Activated CD4-positive, alpha-beta memory T cell treated with anti-CD3 and anti-CD28 coated beads for 36 hours (primary cell): ENCODE measurements at regions of chr3 and their contacts with region 1.

Region 1: GRCh38 chr3:48556793-48557626 is at the start of gene PFKFB4:
- DNase-seq: peak; percentile 100
- H3K4me3 Mint-ChIP-seq: peak within 1 kb of the TSS; percentile 83
- H3K27ac Mint-ChIP-seq: peak within 1 kb of the TSS; percentile 59
- H3K4me1 Mint-ChIP-seq: peaks cover 16% of the 10 kb centered on the region
- H3K27me3 Mint-ChIP-seq: no peaks in the 10 kb centered on the region
- total RNA-seq, gene PFKFB4: 19.4 to 22.4 TPM

Region 2: GRCh38 chr3:48188266-48189201 is 368.5 kb before region 1 on chr3 and contains the start of gene CDC25A:
- CTCF ChIA-PET with region 1: no interaction called
- POLR2A ChIA-PET with region 1: interaction called, 3 read pairs
- intact Hi-C with region 1: loop called (anchors 2 kb)
- DNase-seq: peak; percentile 98
- H3K4me3 Mint-ChIP-seq: peak within 1 kb of the TSS; percentile 94
- H3K27ac Mint-ChIP-seq: peak within 1 kb of the TSS; percentile 66
- H3K4me1 Mint-ChIP-seq: peaks cover 14% of the 10 kb centered on the region
- H3K27me3 Mint-ChIP-seq: peaks cover 7% of the 10 kb centered on the region
- total RNA-seq, gene CDC25A: 33.7 to 36.8 TPM

Region 3: DNA sequence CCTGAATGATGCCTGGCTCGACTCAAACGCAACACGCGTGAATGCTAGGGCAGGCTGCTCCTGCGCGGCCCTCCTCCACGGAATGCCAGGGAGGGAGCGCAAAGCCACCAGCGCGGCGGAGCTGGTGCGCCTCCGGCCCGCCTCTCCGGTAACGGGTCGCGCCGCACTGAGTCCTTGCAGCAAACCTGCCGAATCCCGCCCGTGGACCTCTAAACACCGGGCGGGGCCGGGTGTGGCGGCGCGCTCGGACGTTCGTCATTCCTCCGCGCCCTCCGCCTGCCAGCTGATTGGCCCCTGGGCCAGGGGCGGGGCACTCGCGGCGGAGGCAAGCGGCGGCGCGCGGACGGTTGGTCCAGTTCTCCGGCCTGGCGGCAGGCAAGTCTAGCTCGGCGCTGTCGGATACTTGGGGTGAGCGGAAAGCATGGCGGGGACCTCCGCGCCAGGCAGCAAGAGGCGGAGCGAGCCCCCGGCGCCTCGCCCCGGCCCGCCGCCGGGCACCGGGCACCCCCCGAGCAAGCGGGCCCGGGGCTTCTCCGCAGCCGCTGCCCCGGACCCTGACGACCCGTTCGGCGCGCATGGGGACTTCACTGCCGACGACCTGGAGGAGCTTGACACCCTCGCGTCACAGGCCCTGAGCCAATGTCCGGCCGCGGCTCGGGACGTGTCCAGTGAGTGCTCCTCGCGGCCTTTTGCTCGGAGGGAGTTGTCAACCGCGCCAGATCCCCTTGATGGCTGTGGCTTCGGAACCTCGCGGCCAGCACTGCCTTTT is 110.4 kb before region 1 on chr3 and contains the start of gene ATRIP:
- CTCF ChIA-PET with region 1: interaction called, 10 read pairs
- POLR2A ChIA-PET with region 1: interaction called, 3 read pairs
- intact Hi-C with region 1: no loop called
- DNase-seq: peak; percentile 91
- H3K4me3 Mint-ChIP-seq: peak within 1 kb of the TSS; percentile 90
- H3K27ac Mint-ChIP-seq: peak within 1 kb of the TSS; percentile 64
- H3K4me1 Mint-ChIP-seq: peaks cover 43% of the 10 kb centered on the region
- H3K27me3 Mint-ChIP-seq: no peaks in the 10 kb centered on the region
- total RNA-seq, gene ATRIP: 13.8 to 14.5 TPM

Region 4: GRCh38 chr3:48507351-48508061 is 49.5 kb before region 1 on chr3:
- CTCF ChIA-PET with region 1: interaction called, 4 read pairs
- POLR2A ChIA-PET with region 1: interaction called, 5 read pairs
- intact Hi-C with region 1: loop called (anchors 2 kb)
- DNase-seq: peak; percentile 84
- H3K4me3 Mint-ChIP-seq: no peak overlapping the region
- H3K27ac Mint-ChIP-seq: peak overlapping the region; percentile 74
- H3K4me1 Mint-ChIP-seq: peaks cover 42% of the 10 kb centered on the region
- H3K27me3 Mint-ChIP-seq: no peaks in the 10 kb centered on the region

Region 5: GRCh38 chr3:48567090-48567489 is 10.1 kb after region 1 on chr3:
- CTCF ChIA-PET with region 1: no interaction called
- POLR2A ChIA-PET with region 1: no interaction called
- intact Hi-C with region 1: no loop called
- DNase-seq: no peak
- H3K4me3 Mint-ChIP-seq: no peak overlapping the region
- H3K27ac Mint-ChIP-seq: no peak overlapping the region
- H3K4me1 Mint-ChIP-seq: peaks cover 3% of the 10 kb centered on the region
- H3K27me3 Mint-ChIP-seq: no peaks in the 10 kb centered on the region

Region 6: GRCh38 chr3:48635222-48636021 is 78.4 kb after region 1 on chr3 and contains the start of gene SLC26A6:
- CTCF ChIA-PET with region 1: interaction called, 29 read pairs
- POLR2A ChIA-PET with region 1: interaction called, 7 read pairs
- intact Hi-C with region 1: loop called (anchors 1 kb)
- DNase-seq: peak; percentile 97
- H3K4me3 Mint-ChIP-seq: peak within 1 kb of the TSS; percentile 89
- H3K27ac Mint-ChIP-seq: no peak within 1 kb of the TSS
- H3K4me1 Mint-ChIP-seq: peaks cover 18% of the 10 kb centered on the region
- H3K27me3 Mint-ChIP-seq: no peaks in the 10 kb centered on the region
- total RNA-seq, gene SLC26A6: 47.7 to 52.4 TPM

Region 7: DNA sequence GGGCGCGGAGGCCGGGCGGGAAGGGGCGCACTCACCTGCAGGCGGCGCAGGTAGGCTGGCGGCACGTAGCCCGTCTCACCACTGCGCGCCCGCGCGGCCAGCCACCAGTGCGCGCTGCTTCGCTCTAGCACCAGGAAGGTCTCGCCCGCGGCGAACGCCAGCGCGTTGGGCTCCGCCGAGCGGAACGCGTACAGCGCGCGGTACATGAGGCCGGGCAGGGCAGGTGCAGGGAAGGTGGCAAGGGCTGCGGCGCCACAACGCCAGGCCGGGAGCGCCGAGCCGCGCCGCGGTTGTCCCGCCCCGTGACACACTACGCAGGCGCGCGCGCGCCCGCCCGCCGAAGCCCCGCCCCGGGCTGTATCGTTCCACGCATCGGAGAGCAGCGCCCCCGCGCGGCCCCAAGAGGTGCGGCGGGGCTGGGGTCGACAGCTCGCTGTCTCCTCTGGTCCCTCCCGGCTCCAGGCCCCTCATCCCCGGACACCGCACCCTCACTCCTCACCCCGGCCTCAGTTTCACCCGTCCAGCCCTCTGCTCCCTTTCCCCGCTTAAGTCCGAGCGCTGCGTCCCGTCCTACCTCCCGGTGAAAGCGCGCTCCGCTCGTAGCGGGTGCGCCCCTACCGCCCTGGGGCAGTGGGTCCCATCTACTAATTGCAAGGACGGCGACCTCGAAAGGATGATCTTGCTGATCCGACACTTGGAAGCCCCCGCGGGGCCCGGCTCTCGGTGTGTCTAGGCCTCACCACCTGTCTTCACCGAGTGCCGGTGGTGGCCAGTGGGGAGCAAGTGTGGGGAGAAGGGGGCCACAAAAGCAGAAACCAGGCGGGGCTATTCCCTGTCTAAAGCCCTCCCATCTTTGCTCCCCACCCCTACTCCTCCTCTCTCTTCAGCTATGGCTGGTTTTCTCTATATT is 128.8 kb after region 1 on chr3 and contains the start of gene NCKIPSD:
- CTCF ChIA-PET with region 1: no interaction called
- POLR2A ChIA-PET with region 1: no interaction called
- intact Hi-C with region 1: loop called (anchors 1 kb)
- DNase-seq: peak; percentile 93
- H3K4me3 Mint-ChIP-seq: peak within 1 kb of the TSS; percentile 78
- H3K27ac Mint-ChIP-seq: peak within 1 kb of the TSS; percentile 66
- H3K4me1 Mint-ChIP-seq: peaks cover 24% of the 10 kb centered on the region
- H3K27me3 Mint-ChIP-seq: no peaks in the 10 kb centered on the region
- total RNA-seq, gene NCKIPSD: 36.5 to 38.5 TPM

Region 8: GRCh38 chr3:48708481-48708889 is 151.5 kb after region 1 on chr3:
- CTCF ChIA-PET with region 1: no interaction called
- POLR2A ChIA-PET with region 1: no interaction called
- intact Hi-C with region 1: no loop called
- DNase-seq: peak; percentile 38
- H3K4me3 Mint-ChIP-seq: no peak overlapping the region
- H3K27ac Mint-ChIP-seq: peak overlapping the region; percentile 84
- H3K4me1 Mint-ChIP-seq: peaks cover 35% of the 10 kb centered on the region
- H3K27me3 Mint-ChIP-seq: no peaks in the 10 kb centered on the region